ENCODE measurements at regions of chr3 and their contacts with region 1.

Region 1: DNA sequence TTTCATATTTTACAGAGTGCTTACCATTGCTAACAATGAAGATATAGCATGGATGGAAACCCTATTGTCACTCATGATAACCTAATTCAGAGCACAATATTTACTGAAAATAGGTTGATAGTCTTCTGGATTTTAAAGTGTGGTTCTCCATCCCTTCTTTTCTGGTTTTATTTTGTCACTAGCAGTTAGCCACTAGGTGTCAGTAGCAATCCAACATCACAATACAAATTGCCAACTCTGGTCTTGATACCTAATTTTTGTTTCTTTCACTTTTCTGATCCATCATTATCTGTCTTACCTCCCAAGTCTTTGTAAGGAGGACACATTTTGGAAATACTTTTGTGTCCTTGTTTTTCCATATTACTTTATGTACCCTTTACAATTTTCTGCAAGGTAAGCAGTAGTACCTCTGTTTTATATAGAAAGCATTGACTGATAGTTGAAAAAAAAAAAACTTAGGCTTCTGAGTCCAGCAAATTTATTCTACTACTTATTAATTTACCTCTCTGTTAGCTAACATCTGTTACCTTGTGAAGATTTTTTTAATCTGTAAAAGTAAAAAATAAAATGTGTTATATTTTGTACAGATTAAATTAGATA is 28.3 kb upstream of the CRYBG3 start:
- DNase-seq: peak in 1 of 3 donors; percentile 51
- ATAC-seq: peak; percentile 56
- H3K4me3 ChIP-seq: no peak overlapping the region
- H3K4me1 ChIP-seq: peaks cover 3% of the 10 kb centered on the region
- CTCF ChIP-seq: no peak

Region 2: GRCh38 chr3:97687734-97688133 is 105.8 kb before region 1 on chr3:
- intact Hi-C with region 1: no loop called
- DNase-seq: no peak
- ATAC-seq: no peak
- H3K4me3 ChIP-seq: no peak overlapping the region
- H3K4me1 ChIP-seq: no peaks in the 10 kb centered on the region
- CTCF ChIP-seq: no peak

Region 3: GRCh38 chr3:97910931-97911351 is 117.4 kb after region 1 on chr3:
- intact Hi-C with region 1: no loop called
- DNase-seq: no peak
- ATAC-seq: peak; percentile 47
- H3K4me3 ChIP-seq: no peak overlapping the region
- H3K4me1 ChIP-seq: no peaks in the 10 kb centered on the region
- CTCF ChIP-seq: no peak

Region 4: DNA sequence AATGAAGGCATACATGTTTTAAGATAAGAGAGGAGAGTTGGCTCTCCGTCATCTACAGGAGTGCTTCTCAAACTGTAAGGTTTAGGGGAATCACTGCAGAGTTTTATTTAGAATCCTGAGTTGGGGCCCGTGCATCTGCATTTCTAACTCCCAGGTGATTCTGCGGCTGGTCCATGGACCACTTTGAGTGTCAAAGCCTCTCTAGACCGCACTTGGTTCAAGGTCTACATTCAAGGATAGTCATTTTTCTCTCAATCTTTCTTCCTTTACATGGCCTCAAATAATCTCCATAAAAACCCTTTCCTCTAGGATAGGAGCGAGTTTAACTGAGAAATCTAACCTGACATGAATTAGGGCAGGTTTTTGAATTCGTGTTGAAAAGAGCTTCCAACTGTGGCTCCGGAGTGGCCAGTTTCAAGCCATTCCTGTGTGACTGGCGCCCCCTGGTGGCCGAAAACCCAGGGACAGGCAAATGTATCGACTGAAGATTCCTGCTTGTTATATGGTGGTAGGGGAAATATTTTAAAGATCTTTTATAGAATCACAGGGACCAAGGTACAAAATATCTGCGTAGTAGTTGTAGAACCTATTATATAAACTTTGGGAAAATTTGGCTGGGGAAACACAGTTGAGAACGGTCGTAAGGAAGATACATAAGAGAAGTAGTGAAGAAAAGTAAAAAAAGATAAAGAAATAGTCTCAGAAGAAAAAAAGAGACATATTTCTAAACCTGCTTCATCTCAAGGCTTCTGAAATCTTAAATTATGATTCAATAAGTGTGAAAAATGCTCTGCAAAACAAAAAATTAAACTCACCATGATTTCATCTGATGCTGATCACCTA is 229.7 kb after region 1 on chr3:
- intact Hi-C with region 1: loop called (anchors 2 to 5 kb)
- DNase-seq: peak; percentile 76 to 97 (median 92)
- ATAC-seq: peak; percentile 81
- H3K4me3 ChIP-seq: no peak overlapping the region
- H3K4me1 ChIP-seq: no peaks in the 10 kb centered on the region
- CTCF ChIP-seq: peak; percentile 87

Measured in mucosa of descending colon (tissue), 3 donors.